Activated CD4-positive, alpha-beta T cell treated with anti-CD3 and anti-CD28 coated beads, Interleukin-2, amount 10 ng/mL, durations not matched to agents 24 days and 14 days (primary cell): ENCODE measurements at regions of chr18 and their contacts with region 1.

Region 1: GRCh38 chr18:69538849-69539248 is 138.2 kb downstream of the DOK6 start:
- DNase-seq: no peak
- H3K4me3 Mint-ChIP-seq: no peak overlapping the region
- H3K27ac Mint-ChIP-seq: no peak overlapping the region
- H3K4me1 Mint-ChIP-seq: no peaks in the 10 kb centered on the region
- H3K27me3 Mint-ChIP-seq: no peaks in the 10 kb centered on the region

Region 2: DNA sequence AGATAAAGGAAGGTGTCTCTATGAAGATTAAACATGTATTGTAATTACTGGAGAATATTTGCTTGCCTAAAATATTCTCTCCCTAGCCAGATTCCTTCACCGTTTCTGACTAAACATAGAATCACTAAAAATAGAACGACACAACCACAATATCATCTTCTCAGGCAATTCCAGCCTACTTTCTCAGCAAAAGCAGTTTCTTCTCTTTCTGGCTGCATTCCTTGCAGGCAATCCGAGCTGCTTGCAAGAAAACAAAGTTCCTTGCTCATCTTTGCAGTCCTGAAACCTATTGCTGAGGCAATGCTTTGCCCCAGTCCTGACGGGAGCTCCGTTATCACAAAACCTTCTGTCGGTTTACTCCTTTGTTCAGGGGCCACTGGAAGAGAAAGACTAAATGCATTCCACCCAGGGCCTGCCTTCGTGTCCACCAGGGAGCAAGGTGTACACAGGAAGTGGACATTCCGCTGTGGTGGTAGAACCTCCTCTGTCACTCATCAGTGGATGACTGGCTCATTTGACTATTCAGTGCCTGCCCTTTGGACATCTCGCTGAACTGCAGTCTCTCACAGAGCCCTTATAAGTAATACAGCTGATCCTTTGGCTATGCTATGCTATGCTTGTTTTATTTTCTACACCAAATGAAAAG is 377.3 kb before region 1 on chr18:
- intact Hi-C with region 1: no loop called
- DNase-seq: no peak
- H3K4me3 Mint-ChIP-seq: no peak overlapping the region
- H3K27ac Mint-ChIP-seq: no peak overlapping the region
- H3K4me1 Mint-ChIP-seq: no peaks in the 10 kb centered on the region
- H3K27me3 Mint-ChIP-seq: no peaks in the 10 kb centered on the region

Region 3: GRCh38 chr18:69492861-69493260 is 46.0 kb before region 1 on chr18:
- intact Hi-C with region 1: loop called (anchors 1 kb)
- DNase-seq: no peak
- H3K4me3 Mint-ChIP-seq: no peak overlapping the region
- H3K27ac Mint-ChIP-seq: no peak overlapping the region
- H3K4me1 Mint-ChIP-seq: no peaks in the 10 kb centered on the region
- H3K27me3 Mint-ChIP-seq: no peaks in the 10 kb centered on the region